Caco-2 (cell line): ENCODE measurements at regions of chr3 and their contacts with region 1.

Region 1: DNA sequence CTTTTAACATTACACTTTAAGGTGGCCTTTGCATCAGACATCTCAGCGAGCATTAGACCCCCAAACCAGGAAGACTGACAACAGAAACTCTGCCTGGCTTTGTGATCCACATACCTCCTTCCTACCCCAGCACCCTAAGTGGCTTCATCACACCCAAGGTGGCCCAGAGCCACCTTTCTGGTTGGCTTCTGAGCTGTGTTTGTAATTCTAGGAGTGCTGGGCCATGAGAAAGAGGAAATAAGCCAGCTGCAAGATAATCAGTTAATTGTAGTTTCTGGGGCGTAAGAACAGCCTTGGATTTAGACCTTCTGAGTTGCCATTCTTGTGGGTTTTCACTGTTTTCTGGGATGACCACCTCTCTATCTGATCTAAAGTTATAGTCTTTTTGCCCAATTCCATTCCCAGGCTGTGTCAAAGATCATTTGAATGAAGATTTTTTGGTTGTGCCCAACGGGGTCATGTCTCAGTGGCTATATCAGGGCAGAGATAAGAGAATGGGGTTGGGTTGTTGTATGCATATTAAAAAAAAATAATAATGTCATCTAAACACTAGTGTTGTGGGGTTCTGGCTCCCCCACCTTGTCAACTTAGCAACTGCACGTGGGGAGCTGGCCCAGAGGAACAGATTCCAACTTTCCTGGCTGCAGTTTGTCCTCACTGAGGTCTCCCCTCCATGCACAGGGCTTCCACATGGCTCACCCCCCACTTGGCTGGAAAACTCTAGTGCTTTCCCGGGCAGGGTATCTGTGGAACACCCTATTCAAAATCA is 234.8 kb upstream of the WNT5A start:
- DNase-seq: peak in 1 of 2 experiments; percentile 31
- H3K4me3 ChIP-seq: no peak overlapping the region
- H3K4me3 Mint-ChIP-seq: no peak overlapping the region
- H3K27ac Mint-ChIP-seq: no peak overlapping the region
- H3K4me1 ChIP-seq: no peaks in the 10 kb centered on the region
- H3K4me1 Mint-ChIP-seq: no peaks in the 10 kb centered on the region
- H3K27me3 ChIP-seq: 0 out of 2 replicates have a peak, but pooled peaks cover 1% of the 10 kb centered on the region
- H3K27me3 Mint-ChIP-seq: peaks cover 9% of the 10 kb centered on the region
- CTCF ChIP-seq: peak; percentile 51 to 64

Region 2: DNA sequence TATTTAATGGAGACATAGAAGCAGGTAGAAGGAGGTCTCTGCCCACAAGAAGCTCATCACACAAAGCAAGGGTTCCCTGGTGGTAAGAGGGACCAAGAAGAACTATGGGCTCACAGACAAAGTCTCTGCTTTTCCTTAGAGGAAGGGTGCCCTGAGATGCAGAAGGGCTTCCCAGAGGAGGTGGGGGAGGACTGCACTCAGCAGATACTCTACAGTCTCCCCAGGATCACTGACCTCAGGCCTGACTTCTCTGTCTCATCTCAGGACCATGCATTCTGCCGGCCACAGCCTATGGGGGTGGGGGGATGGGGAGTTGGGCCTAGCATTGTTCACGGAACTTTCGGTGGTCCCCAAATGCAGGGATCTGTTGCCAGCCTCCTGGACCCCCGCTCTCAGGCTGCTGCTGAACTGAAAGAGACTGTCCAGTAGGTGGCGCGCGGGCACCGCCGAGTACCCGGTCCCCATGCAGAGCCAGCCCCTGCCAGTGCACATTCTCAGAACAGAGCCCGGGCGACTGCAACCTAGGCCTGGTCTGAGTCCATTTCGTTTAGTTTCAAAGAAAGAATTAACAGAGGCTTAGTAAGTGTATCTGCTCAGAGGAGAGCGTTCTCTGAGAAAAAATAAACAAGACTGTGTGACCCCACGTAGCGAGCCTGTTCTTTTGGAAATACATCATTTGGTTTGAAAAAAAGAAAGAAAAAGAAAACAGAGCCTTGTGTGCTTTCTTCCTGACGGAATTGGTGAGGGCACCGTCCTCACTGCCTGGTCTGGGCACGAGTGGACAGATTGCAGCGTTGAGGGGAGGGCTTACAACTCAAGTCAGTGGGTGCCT is 868.1 kb before region 1 on chr3:
- CTCF ChIA-PET with region 1: no interaction called
- POLR2A ChIA-PET with region 1: no interaction called
- intact Hi-C with region 1: loop called (anchors 5 kb)
- DNase-seq: peak; percentile 64 to 75
- H3K4me3 ChIP-seq: no peak overlapping the region
- H3K4me3 Mint-ChIP-seq: no peak overlapping the region
- H3K27ac Mint-ChIP-seq: no peak overlapping the region
- H3K4me1 ChIP-seq: no peaks in the 10 kb centered on the region
- H3K4me1 Mint-ChIP-seq: no peaks in the 10 kb centered on the region
- H3K27me3 ChIP-seq: no peaks in the 10 kb centered on the region; the same call in 1 of the 2 replicates
- H3K27me3 Mint-ChIP-seq: peaks cover 14% of the 10 kb centered on the region
- CTCF ChIP-seq: peak; percentile 82 to 88

Region 3: DNA sequence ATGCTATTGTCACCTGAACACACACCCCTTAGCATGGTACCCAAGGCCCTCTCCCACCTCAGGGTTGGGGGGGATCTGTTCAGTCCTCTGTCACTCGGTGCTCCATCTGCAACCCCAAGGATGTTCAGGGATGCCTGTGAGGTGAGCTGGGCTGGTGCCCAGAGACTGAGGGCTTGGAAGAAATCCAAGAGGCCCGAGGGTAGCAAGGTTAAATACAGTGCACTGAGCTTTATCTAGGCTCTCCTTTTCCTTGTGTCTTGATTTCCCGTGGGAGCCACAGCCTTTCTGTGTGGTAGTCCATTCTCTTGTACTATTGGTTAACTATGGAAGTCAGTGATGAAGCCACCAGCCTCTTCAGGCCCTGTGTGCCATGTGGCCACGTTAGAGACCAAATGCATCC is 216.1 kb before region 1 on chr3:
- CTCF ChIA-PET with region 1: interaction called, 3 read pairs
- POLR2A ChIA-PET with region 1: no interaction called
- intact Hi-C with region 1: loop called (anchors 5 kb)
- DNase-seq: no peak
- H3K4me3 ChIP-seq: no peak overlapping the region
- H3K4me3 Mint-ChIP-seq: no peak overlapping the region
- H3K27ac Mint-ChIP-seq: no peak overlapping the region
- H3K4me1 ChIP-seq: no peaks in the 10 kb centered on the region
- H3K4me1 Mint-ChIP-seq: no peaks in the 10 kb centered on the region
- H3K27me3 ChIP-seq: no peaks in the 10 kb centered on the region
- H3K27me3 Mint-ChIP-seq: no peaks in the 10 kb centered on the region
- CTCF ChIP-seq: no peak